Left lung (tissue), 14 donors: ENCODE measurements at regions of chr11 and their contacts with region 1.

Region 1: DNA sequence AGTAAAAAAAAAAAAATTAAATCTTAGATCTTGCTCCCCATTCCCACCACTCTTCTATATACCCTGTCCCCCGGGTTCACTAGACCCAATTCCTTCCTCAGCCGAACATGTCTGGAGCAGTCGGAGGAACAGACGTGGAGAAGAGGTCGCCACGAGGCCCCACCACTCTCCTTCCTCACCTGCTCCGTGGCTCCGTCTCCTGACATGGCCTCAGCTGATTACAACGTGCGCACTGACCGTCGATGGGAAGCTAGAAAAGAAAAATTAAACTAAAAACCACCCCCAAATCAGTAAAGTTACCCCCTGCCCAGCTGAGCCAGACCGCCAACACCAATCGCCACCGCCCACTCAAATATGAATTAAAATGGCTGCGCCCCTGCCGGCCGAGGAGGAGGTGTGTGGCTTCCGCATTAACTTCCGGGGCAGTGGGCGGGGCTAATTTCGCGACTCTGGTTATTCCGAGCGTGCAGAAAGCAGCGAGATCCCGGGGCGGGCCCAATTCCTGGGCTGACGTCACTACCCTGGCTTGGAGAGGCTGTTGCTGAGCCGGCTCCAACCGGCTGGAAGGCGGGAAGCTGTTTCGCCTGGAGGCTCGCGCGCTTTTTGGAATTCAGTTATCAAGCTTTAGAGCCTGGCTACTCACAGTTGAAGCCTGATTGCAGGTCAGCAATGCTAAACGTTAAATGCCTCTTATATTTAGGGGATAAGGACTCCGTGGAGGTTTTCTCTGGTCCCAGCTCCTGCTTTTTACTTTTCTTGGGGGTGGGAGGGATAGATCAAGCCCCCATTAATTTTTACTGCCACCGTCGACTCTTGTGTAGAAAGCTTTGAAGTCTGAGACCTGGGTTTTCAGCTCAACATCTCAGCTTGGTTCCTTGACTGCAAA is at the start of gene CSTF3:
- DNase-seq: peak; percentile 100
- ATAC-seq: peak; percentile 99
- H3K4me3 ChIP-seq: peak within 1 kb of the TSS; percentile 75 to 76
- H3K27ac ChIP-seq: peak within 1 kb of the TSS; percentile 79 to 86
- H3K4me1 ChIP-seq: peaks cover 8 to 45% of the 10 kb centered on the region in 2 donors
- H3K27me3 ChIP-seq: no peaks in the 10 kb centered on the region
- CTCF ChIP-seq: peak; percentile 37 to 66
- polyA plus RNA-seq, gene CSTF3: 47.1 to 64.4 (median 52.6) TPM

Region 2: GRCh38 chr11:33257897-33258630 is 96.7 kb after region 1 on chr11:
- intact Hi-C with region 1: loop called in 1 of 2 experiments (anchors 10 kb)
- DNase-seq: peak; percentile 91 to 96 (median 92)
- ATAC-seq: peak; percentile 83
- H3K4me3 ChIP-seq: peak overlapping the region; percentile 63 to 67
- H3K27ac ChIP-seq: peak overlapping the region; percentile 100
- H3K4me1 ChIP-seq: peaks cover 19 to 42% of the 10 kb centered on the region in 2 donors
- H3K27me3 ChIP-seq: no peaks in the 10 kb centered on the region
- CTCF ChIP-seq: peak; percentile 21 to 40

Region 3: GRCh38 chr11:33329705-33330329 is 168.5 kb after region 1 on chr11:
- intact Hi-C with region 1: loop called in 1 of 2 experiments (anchors 10 kb)
- DNase-seq: peak in 2 of 4 donors; percentile 36 to 73
- ATAC-seq: peak; percentile 93
- H3K4me3 ChIP-seq: no peak overlapping the region
- H3K27ac ChIP-seq: no peak overlapping the region
- H3K4me1 ChIP-seq: peaks cover 0 to 50% of the 10 kb centered on the region in 2 donors
- H3K27me3 ChIP-seq: no peaks in the 10 kb centered on the region
- CTCF ChIP-seq: peak in 1 of 2 donors; percentile 49

Region 4: GRCh38 chr11:33687733-33688479 is 526.5 kb after region 1 on chr11:
- intact Hi-C with region 1: loop called in 1 of 2 experiments (anchors 5 kb)
- DNase-seq: peak in 2 of 4 donors; percentile 42 to 66
- ATAC-seq: peak; percentile 25
- H3K4me3 ChIP-seq: no peak overlapping the region
- H3K27ac ChIP-seq: no peak overlapping the region
- H3K4me1 ChIP-seq: peaks cover 16 to 42% of the 10 kb centered on the region in 2 donors
- H3K27me3 ChIP-seq: no peaks in the 10 kb centered on the region
- CTCF ChIP-seq: peak; percentile 41 to 55